Aorta (tissue), 5 donors: ENCODE measurements at regions of chr3 and their contacts with region 1.

Region 1: GRCh38 chr3:34260271-34261006 is 462.0 kb downstream of the PDCD6IP start:
- DNase-seq: peak; percentile 60 to 77
- ATAC-seq: no peak
- H3K4me3 ChIP-seq: no peak overlapping the region
- H3K27ac ChIP-seq: no peak overlapping the region
- H3K4me1 ChIP-seq: peaks cover 6 to 24% of the 10 kb centered on the region in 2 donors
- H3K27me3 ChIP-seq: no peaks in the 10 kb centered on the region

Region 2: DNA sequence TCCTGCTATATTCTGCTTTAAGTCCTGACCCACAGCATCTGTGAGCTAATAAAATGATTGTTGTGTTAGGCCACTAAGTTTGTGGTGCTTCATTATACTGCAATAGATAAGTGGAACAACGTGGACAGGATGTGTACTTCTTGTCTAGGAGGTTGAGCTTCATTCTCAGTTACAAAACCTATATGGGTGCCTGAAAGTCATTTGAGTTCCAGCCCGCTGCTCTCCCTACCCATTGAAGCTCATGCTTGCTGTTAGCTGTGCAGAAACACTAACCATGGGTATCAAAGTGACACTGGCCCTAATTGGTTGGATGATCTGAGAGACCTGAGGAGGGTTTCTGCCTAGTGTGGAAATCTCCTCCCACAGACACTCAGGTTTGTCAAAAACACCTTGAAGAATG is 104.8 kb before region 1 on chr3:
- intact Hi-C with region 1: no loop called
- DNase-seq: no peak
- ATAC-seq: no peak
- H3K4me3 ChIP-seq: no peak overlapping the region
- H3K27ac ChIP-seq: no peak overlapping the region
- H3K4me1 ChIP-seq: peaks cover 3 to 4% of the 10 kb centered on the region in 2 donors
- H3K27me3 ChIP-seq: no peaks in the 10 kb centered on the region

Region 3: GRCh38 chr3:34207002-34207401 is 53.4 kb before region 1 on chr3:
- intact Hi-C with region 1: loop called (anchors 5 kb)
- DNase-seq: no peak
- ATAC-seq: no peak
- H3K4me3 ChIP-seq: no peak overlapping the region
- H3K27ac ChIP-seq: peak overlapping the region; percentile 44 to 82
- H3K4me1 ChIP-seq: peaks cover 11 to 13% of the 10 kb centered on the region in 2 donors
- H3K27me3 ChIP-seq: no peaks in the 10 kb centered on the region

Region 4: DNA sequence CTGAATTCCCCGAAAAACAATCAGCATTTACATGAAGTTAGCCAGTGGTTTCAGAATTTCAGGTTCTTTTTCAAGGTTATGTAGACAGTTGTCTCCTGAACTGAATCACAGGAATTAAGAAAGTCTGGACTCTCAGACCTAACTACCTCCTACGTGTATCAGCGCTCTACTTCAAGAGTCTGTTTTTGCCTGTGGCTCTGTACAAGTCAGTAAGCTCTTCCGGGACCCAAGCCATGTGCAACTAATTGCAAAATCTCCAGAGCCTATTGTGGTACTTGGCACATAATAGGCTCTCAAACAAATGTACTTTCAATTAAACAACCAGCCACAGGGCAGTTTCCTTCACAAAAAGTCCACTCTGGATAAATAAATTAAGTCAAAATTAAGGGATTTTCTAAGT is 47.8 kb before region 1 on chr3:
- intact Hi-C with region 1: loop called (anchors 5 kb)
- DNase-seq: peak in 1 of 2 donors; percentile 69
- ATAC-seq: peak; percentile 67
- H3K4me3 ChIP-seq: no peak overlapping the region
- H3K27ac ChIP-seq: peak overlapping the region; percentile 23 to 93
- H3K4me1 ChIP-seq: peaks cover 11 to 20% of the 10 kb centered on the region in 2 donors
- H3K27me3 ChIP-seq: no peaks in the 10 kb centered on the region

Region 5: GRCh38 chr3:34323517-34323916 is 63.1 kb after region 1 on chr3:
- intact Hi-C with region 1: no loop called
- DNase-seq: no peak
- ATAC-seq: no peak
- H3K4me3 ChIP-seq: no peak overlapping the region
- H3K27ac ChIP-seq: no peak overlapping the region
- H3K4me1 ChIP-seq: no peaks in the 10 kb centered on the region
- H3K27me3 ChIP-seq: no peaks in the 10 kb centered on the region

Region 6: GRCh38 chr3:34511891-34512290 is 251.5 kb after region 1 on chr3:
- intact Hi-C with region 1: no loop called
- DNase-seq: no peak
- ATAC-seq: no peak
- H3K4me3 ChIP-seq: no peak overlapping the region
- H3K27ac ChIP-seq: no peak overlapping the region
- H3K4me1 ChIP-seq: no peaks in the 10 kb centered on the region
- H3K27me3 ChIP-seq: no peaks in the 10 kb centered on the region